CD4-positive, alpha-beta memory T cell (primary cell): ENCODE measurements at regions of chr4 and their contacts with region 1.

Region 1: GRCh38 chr4:119041951-119042560 is 93.6 kb upstream of the MYOZ2 start:
- DNase-seq: peak; percentile 58 to 63 (median 61)
- H3K4me3 ChIP-seq: no peak overlapping the region
- H3K4me3 Mint-ChIP-seq: no peak overlapping the region
- H3K27ac ChIP-seq: no peak overlapping the region
- H3K27ac Mint-ChIP-seq: no peak overlapping the region
- H3K4me1 ChIP-seq: no peaks in the 10 kb centered on the region
- H3K4me1 Mint-ChIP-seq: no peaks in the 10 kb centered on the region
- H3K27me3 ChIP-seq: no peaks in the 10 kb centered on the region
- H3K27me3 Mint-ChIP-seq: peaks cover 0 to 1% of the 10 kb centered on the region in 2 donors

Region 2: GRCh38 chr4:118772081-118772766 is 269.8 kb before region 1 on chr4:
- CTCF ChIA-PET with region 1: interaction called, 5 read pairs
- POLR2A ChIA-PET with region 1: no interaction called
- intact Hi-C with region 1: loop called (anchors 2 kb)
- DNase-seq: peak in 4 of 5 donors; percentile 40 to 49 (median 44)
- H3K4me3 ChIP-seq: no peak overlapping the region
- H3K4me3 Mint-ChIP-seq: no peak overlapping the region
- H3K27ac ChIP-seq: no peak overlapping the region
- H3K27ac Mint-ChIP-seq: peak overlapping the region in 1 of 7 donors; percentile 42
- H3K4me1 ChIP-seq: no peaks in the 10 kb centered on the region
- H3K4me1 Mint-ChIP-seq: no peaks in the 10 kb centered on the region
- H3K27me3 ChIP-seq: no peaks in the 10 kb centered on the region
- H3K27me3 Mint-ChIP-seq: no peaks in the 10 kb centered on the region

Region 3: GRCh38 chr4:118954246-118954645 is 87.8 kb before region 1 on chr4:
- CTCF ChIA-PET with region 1: no interaction called
- POLR2A ChIA-PET with region 1: no interaction called
- intact Hi-C with region 1: no loop called
- DNase-seq: no peak
- H3K4me3 ChIP-seq: no peak overlapping the region
- H3K4me3 Mint-ChIP-seq: no peak overlapping the region
- H3K27ac ChIP-seq: no peak overlapping the region
- H3K27ac Mint-ChIP-seq: no peak overlapping the region
- H3K4me1 ChIP-seq: no peaks in the 10 kb centered on the region
- H3K4me1 Mint-ChIP-seq: no peaks in the 10 kb centered on the region
- H3K27me3 ChIP-seq: no peaks in the 10 kb centered on the region
- H3K27me3 Mint-ChIP-seq: peaks cover 0 to 6% of the 10 kb centered on the region in 2 donors

Region 4: GRCh38 chr4:119025916-119026661 is 16.0 kb before region 1 on chr4:
- CTCF ChIA-PET with region 1: interaction called, 13 read pairs
- POLR2A ChIA-PET with region 1: no interaction called
- intact Hi-C with region 1: no loop called
- DNase-seq: no peak
- H3K4me3 ChIP-seq: no peak overlapping the region
- H3K4me3 Mint-ChIP-seq: no peak overlapping the region
- H3K27ac ChIP-seq: no peak overlapping the region
- H3K27ac Mint-ChIP-seq: no peak overlapping the region
- H3K4me1 ChIP-seq: no peaks in the 10 kb centered on the region
- H3K4me1 Mint-ChIP-seq: no peaks in the 10 kb centered on the region
- H3K27me3 ChIP-seq: no peaks in the 10 kb centered on the region
- H3K27me3 Mint-ChIP-seq: peaks cover 3 to 9% of the 10 kb centered on the region in 2 donors

Region 5: DNA sequence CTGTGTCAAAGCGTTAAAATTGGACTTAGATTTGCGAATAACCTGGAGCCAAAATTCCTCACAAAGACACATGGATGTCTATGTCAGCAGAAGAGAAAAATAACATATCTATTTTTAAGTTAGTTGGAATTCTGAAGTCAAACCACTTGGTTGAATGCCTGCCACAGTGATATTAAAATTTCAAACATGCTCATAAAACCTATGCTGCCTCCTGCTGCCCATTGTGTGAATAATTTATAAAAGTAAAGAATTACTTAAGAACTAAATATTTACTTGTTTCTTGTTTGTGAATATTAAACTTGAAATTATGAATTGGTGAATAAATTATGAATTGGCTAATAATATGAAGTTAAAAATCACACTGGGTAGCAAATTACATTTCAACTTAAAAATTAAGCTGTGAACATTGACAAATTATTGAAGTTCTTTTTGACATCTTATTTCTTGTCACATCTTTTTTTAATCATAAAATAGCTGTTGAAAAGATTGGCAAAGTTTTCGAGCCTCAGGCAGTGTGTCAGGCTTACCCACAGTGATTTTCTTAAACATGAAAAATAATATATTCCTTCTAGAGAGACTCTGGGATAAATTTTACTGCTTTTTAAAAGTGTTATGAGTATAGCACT is 244.4 kb after region 1 on chr4:
- CTCF ChIA-PET with region 1: interaction called, 35 read pairs
- POLR2A ChIA-PET with region 1: no interaction called
- intact Hi-C with region 1: loop called (anchors 1 kb)
- DNase-seq: peak in 4 of 5 donors; percentile 35 to 50 (median 48)
- H3K4me3 ChIP-seq: no peak overlapping the region
- H3K4me3 Mint-ChIP-seq: no peak overlapping the region
- H3K27ac ChIP-seq: no peak overlapping the region
- H3K27ac Mint-ChIP-seq: peak overlapping the region in 1 of 7 donors; percentile 22
- H3K4me1 ChIP-seq: peaks cover 19% of the 10 kb centered on the region
- H3K4me1 Mint-ChIP-seq: peaks cover 18 to 24% (median 22%) of the 10 kb centered on the region in 4 donors
- H3K27me3 ChIP-seq: no peaks in the 10 kb centered on the region
- H3K27me3 Mint-ChIP-seq: no peaks in the 10 kb centered on the region

Region 6: GRCh38 chr4:119471259-119471658 is 429.2 kb after region 1 on chr4:
- CTCF ChIA-PET with region 1: no interaction called
- POLR2A ChIA-PET with region 1: no interaction called
- intact Hi-C with region 1: loop called (anchors 5 kb)
- DNase-seq: no peak
- H3K4me3 ChIP-seq: no peak overlapping the region
- H3K4me3 Mint-ChIP-seq: no peak overlapping the region
- H3K27ac ChIP-seq: no peak overlapping the region
- H3K27ac Mint-ChIP-seq: no peak overlapping the region
- H3K4me1 ChIP-seq: no peaks in the 10 kb centered on the region
- H3K4me1 Mint-ChIP-seq: peaks cover 0 to 3% (median 0%) of the 10 kb centered on the region in 4 donors
- H3K27me3 ChIP-seq: no peaks in the 10 kb centered on the region
- H3K27me3 Mint-ChIP-seq: no peaks in the 10 kb centered on the region

Region 7: DNA sequence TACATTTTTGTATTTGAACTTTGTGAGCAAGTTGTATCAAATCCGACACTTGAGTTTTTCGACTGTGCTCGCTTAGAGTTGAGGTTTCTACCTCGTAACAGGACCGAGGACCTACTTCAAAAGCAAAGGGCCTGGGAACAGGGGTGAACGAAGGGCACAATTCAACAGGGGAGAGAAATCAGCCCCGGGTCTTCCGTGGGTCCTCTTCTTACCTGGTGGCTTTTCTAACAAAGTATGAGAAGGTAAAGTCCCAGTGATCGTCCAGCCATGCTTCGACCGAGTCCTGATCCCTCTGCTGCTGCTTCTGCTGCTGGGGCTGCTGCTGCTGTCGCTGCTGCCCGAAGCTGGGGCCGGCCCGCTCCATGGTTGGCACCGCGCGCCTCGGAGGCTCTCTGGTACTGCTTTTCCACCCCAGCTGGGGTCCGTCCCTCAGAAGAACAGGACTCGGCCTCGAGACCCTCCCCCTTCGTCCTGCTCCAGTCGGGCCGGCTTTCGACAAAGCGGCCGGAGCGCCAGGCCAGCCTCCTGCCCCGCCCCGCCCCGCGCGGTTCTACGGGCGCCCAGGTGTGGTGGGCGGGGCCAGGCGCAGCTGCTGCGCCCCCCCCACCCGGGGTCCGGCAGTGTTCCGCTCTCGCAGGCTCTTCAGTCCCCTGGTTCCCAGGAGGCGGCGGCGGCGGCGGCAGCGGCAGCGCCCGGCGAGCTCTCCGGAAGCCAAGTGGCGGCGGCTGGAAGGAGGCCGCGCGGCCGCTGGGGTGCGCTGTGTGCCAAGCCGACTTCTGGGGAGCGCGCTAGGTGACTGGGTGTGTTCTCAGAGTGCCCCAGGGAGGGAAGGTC is 586.5 kb after region 1 on chr4 and contains the start of gene PDE5A:
- CTCF ChIA-PET with region 1: interaction called, 4 read pairs
- POLR2A ChIA-PET with region 1: no interaction called
- intact Hi-C with region 1: loop called (anchors 5 kb)
- DNase-seq: peak; percentile 67 to 75 (median 71)
- H3K4me3 ChIP-seq: peak within 1 kb of the TSS; percentile 33 to 67
- H3K4me3 Mint-ChIP-seq: peak within 1 kb of the TSS; percentile 89 to 94 (median 92)
- H3K27ac ChIP-seq: peak within 1 kb of the TSS; percentile 48
- H3K27ac Mint-ChIP-seq: peak within 1 kb of the TSS; percentile 72 to 91 (median 85)
- H3K4me1 ChIP-seq: peaks cover 16% of the 10 kb centered on the region
- H3K4me1 Mint-ChIP-seq: peaks cover 7 to 26% (median 16%) of the 10 kb centered on the region in 4 donors
- H3K27me3 ChIP-seq: peaks cover 4% of the 10 kb centered on the region
- H3K27me3 Mint-ChIP-seq: peaks cover 4 to 7% of the 10 kb centered on the region in 2 donors
- total RNA-seq, gene PDE5A: 1.8 to 2.9 TPM